GM12878 (cell line): ENCODE measurements at regions of chr17 and their contacts with region 1.

Region 1: DNA sequence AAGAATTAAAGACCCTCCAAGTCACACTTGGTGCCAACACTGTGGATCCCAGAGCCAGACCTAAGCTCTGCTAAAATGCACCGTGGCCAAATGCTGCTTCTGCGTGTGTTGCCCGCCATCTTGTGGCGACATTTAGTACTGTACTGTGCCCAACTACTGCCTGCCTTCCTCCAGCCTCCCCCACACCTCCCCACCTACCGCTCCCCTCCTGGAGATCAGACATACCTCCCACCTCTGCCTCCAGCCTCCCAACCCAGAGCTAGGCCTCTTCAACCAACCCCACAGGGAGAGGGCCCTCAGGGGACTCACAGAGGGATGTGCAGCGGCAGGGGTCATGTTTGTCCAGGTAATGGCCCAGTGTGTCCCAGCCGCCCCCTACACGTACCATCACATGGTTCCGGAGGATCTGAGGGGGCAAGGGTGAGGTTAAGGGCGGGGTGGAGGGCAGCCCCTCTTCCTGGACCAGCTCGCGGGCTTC is 5.5 kb downstream of the GAS2L2 start:
- DNase-seq: peak; percentile 17
- ATAC-seq: peak; percentile 97
- H3K4me3 ChIP-seq: no peak overlapping the region
- H3K27ac ChIP-seq: no peak overlapping the region
- H3K4me1 ChIP-seq: no peaks in the 10 kb centered on the region
- H3K27me3 ChIP-seq: peaks cover 2 to 6% of the 10 kb centered on the region in 2 experiments; a peak in 3 of 4 replicates
- CTCF ChIP-seq: peak; percentile 80 to 93 (median 85)
- EP300 ChIP-seq: no peak
- POLR2A ChIP-seq: no peak
- RAD21 ChIP-seq: peak; percentile 89

Region 2: GRCh38 chr17:35161281-35161761 is 586.3 kb before region 1 on chr17:
- CTCF ChIA-PET with region 1: no interaction called
- POLR2A ChIA-PET with region 1: no interaction called
- RAD21 ChIA-PET with region 1: no interaction called
- SMC1A ChIA-PET with region 1: no interaction called
- in situ Hi-C with region 1: loop called (anchors 10 kb)
- intact Hi-C with region 1: no loop called
- DNase-seq: no peak
- ATAC-seq: no peak
- H3K4me3 ChIP-seq: no peak overlapping the region
- H3K27ac ChIP-seq: no peak overlapping the region
- H3K4me1 ChIP-seq: no peaks in the 10 kb centered on the region
- H3K27me3 ChIP-seq: peaks cover 1 to 3% of the 10 kb centered on the region in 2 experiments; a peak in 2 of 4 replicates
- CTCF ChIP-seq: no peak
- EP300 ChIP-seq: no peak
- POLR2A ChIP-seq: no peak
- RAD21 ChIP-seq: no peak

Region 3: GRCh38 chr17:35312790-35313711 is 434.5 kb before region 1 on chr17:
- CTCF ChIA-PET with region 1: interaction called, 7 read pairs
- POLR2A ChIA-PET with region 1: no interaction called
- RAD21 ChIA-PET with region 1: no interaction called
- SMC1A ChIA-PET with region 1: no interaction called
- in situ Hi-C with region 1: loop called (anchors 5 kb)
- intact Hi-C with region 1: no loop called
- DNase-seq: peak; percentile 43
- ATAC-seq: peak; percentile 97
- H3K4me3 ChIP-seq: peak overlapping the region; percentile 52
- H3K27ac ChIP-seq: no peak overlapping the region
- H3K4me1 ChIP-seq: peaks cover 9% of the 10 kb centered on the region
- H3K27me3 ChIP-seq: no peaks in the 10 kb centered on the region
- CTCF ChIP-seq: peak; percentile 77 to 82 (median 78)
- EP300 ChIP-seq: no peak
- POLR2A ChIP-seq: no peak
- RAD21 ChIP-seq: peak; percentile 92

Region 4: GRCh38 chr17:35578197-35578928 is 169.2 kb before region 1 on chr17 and contains the start of gene PEX12:
- CTCF ChIA-PET with region 1: interaction called, 10 read pairs
- POLR2A ChIA-PET with region 1: no interaction called
- RAD21 ChIA-PET with region 1: no interaction called
- SMC1A ChIA-PET with region 1: no interaction called
- in situ Hi-C with region 1: no loop called
- intact Hi-C with region 1: no loop called
- DNase-seq: peak; percentile 58
- ATAC-seq: peak; percentile 94
- H3K4me3 ChIP-seq: peak within 1 kb of the TSS; percentile 83
- H3K27ac ChIP-seq: peak within 1 kb of the TSS; percentile 93
- H3K4me1 ChIP-seq: peaks cover 11% of the 10 kb centered on the region
- H3K27me3 ChIP-seq: no peaks in the 10 kb centered on the region
- CTCF ChIP-seq: no peak
- EP300 ChIP-seq: no peak
- POLR2A ChIP-seq: peak; percentile 90
- RAD21 ChIP-seq: no peak
- polyA plus RNA-seq, gene PEX12: 2.9 TPM

Region 5: GRCh38 chr17:35612924-35613521 is 134.6 kb before region 1 on chr17:
- CTCF ChIA-PET with region 1: interaction called, 116 read pairs
- POLR2A ChIA-PET with region 1: interaction called, 3 read pairs
- RAD21 ChIA-PET with region 1: interaction called, 55 read pairs
- SMC1A ChIA-PET with region 1: interaction called, 33 read pairs
- in situ Hi-C with region 1: loop called (anchors 5 kb)
- intact Hi-C with region 1: loop called (anchors 1 kb)
- DNase-seq: no peak
- ATAC-seq: peak; percentile 52
- H3K4me3 ChIP-seq: no peak overlapping the region
- H3K27ac ChIP-seq: no peak overlapping the region
- H3K4me1 ChIP-seq: peaks cover 2% of the 10 kb centered on the region; the same call in 1 of the 2 replicates
- H3K27me3 ChIP-seq: no peaks in the 10 kb centered on the region
- CTCF ChIP-seq: peak; percentile 58 to 69 (median 59); a peak in 5 of 6 replicates
- EP300 ChIP-seq: no peak
- POLR2A ChIP-seq: no peak
- RAD21 ChIP-seq: peak; percentile 59

Region 6: GRCh38 chr17:35731239-35731931 is 16.2 kb before region 1 on chr17 and contains the start of gene RASL10B:
- CTCF ChIA-PET with region 1: interaction called, 11 read pairs
- POLR2A ChIA-PET with region 1: no interaction called
- RAD21 ChIA-PET with region 1: no interaction called
- SMC1A ChIA-PET with region 1: no interaction called
- in situ Hi-C with region 1: no loop called
- intact Hi-C with region 1: no loop called
- DNase-seq: no peak
- ATAC-seq: peak; percentile 78
- H3K4me3 ChIP-seq: peak within 1 kb of the TSS; percentile 11; the same call in 1 of the 2 replicates
- H3K27ac ChIP-seq: no peak within 1 kb of the TSS
- H3K4me1 ChIP-seq: no peaks in the 10 kb centered on the region
- H3K27me3 ChIP-seq: no peaks in the 10 kb centered on the region; a peak in 1 of 4 replicates
- CTCF ChIP-seq: no peak
- EP300 ChIP-seq: no peak
- POLR2A ChIP-seq: no peak
- RAD21 ChIP-seq: no peak
- polyA plus RNA-seq, gene RASL10B: not detected

Region 7: GRCh38 chr17:35849469-35850348 is 102.1 kb after region 1 on chr17:
- CTCF ChIA-PET with region 1: no interaction called
- POLR2A ChIA-PET with region 1: no interaction called
- RAD21 ChIA-PET with region 1: no interaction called
- SMC1A ChIA-PET with region 1: no interaction called
- in situ Hi-C with region 1: no loop called
- intact Hi-C with region 1: no loop called
- DNase-seq: peak; percentile 20
- ATAC-seq: peak; percentile 95
- H3K4me3 ChIP-seq: no peak overlapping the region
- H3K27ac ChIP-seq: no peak overlapping the region
- H3K4me1 ChIP-seq: no peaks in the 10 kb centered on the region
- H3K27me3 ChIP-seq: no peaks in the 10 kb centered on the region
- CTCF ChIP-seq: peak; percentile 73 to 79 (median 75)
- EP300 ChIP-seq: no peak
- POLR2A ChIP-seq: no peak
- RAD21 ChIP-seq: peak; percentile 91